Activated B cell treated with CpG ODN at 0.5 μM for 24 hours (primary cell): ENCODE measurements at regions of chr11 and their contacts with region 1.

Region 1: GRCh38 chr11:34585735-34586487 is 35.0 kb upstream of the EHF start:
- DNase-seq: peak; percentile 25
- ATAC-seq: peak; percentile 92
- H3K4me3 Mint-ChIP-seq: peak overlapping the region; percentile 29
- H3K27ac Mint-ChIP-seq: peak overlapping the region; percentile 77
- H3K4me1 Mint-ChIP-seq: peaks cover 25% of the 10 kb centered on the region
- H3K27me3 Mint-ChIP-seq: no peaks in the 10 kb centered on the region
- CTCF ChIP-seq: peak; percentile 18

Region 2: GRCh38 chr11:34512840-34513681 is 72.8 kb before region 1 on chr11:
- CTCF ChIA-PET with region 1: interaction called, 21 read pairs
- POLR2A ChIA-PET with region 1: interaction called, 4 read pairs
- intact Hi-C with region 1: loop called (anchors 1 kb)
- DNase-seq: peak; percentile 44
- ATAC-seq: peak; percentile 99
- H3K4me3 Mint-ChIP-seq: no peak overlapping the region
- H3K27ac Mint-ChIP-seq: no peak overlapping the region
- H3K4me1 Mint-ChIP-seq: no peaks in the 10 kb centered on the region
- H3K27me3 Mint-ChIP-seq: no peaks in the 10 kb centered on the region
- CTCF ChIP-seq: peak; percentile 35

Region 3: GRCh38 chr11:34624069-34624468 is 38.2 kb after region 1 on chr11:
- CTCF ChIA-PET with region 1: interaction called, 14 read pairs
- POLR2A ChIA-PET with region 1: interaction called, 6 read pairs
- intact Hi-C with region 1: no loop called
- DNase-seq: peak; percentile 46
- ATAC-seq: peak; percentile 94
- H3K4me3 Mint-ChIP-seq: peak overlapping the region; percentile 66
- H3K27ac Mint-ChIP-seq: peak overlapping the region; percentile 37
- H3K4me1 Mint-ChIP-seq: peaks cover 31% of the 10 kb centered on the region
- H3K27me3 Mint-ChIP-seq: peaks cover 6% of the 10 kb centered on the region
- CTCF ChIP-seq: no peak

Region 4: DNA sequence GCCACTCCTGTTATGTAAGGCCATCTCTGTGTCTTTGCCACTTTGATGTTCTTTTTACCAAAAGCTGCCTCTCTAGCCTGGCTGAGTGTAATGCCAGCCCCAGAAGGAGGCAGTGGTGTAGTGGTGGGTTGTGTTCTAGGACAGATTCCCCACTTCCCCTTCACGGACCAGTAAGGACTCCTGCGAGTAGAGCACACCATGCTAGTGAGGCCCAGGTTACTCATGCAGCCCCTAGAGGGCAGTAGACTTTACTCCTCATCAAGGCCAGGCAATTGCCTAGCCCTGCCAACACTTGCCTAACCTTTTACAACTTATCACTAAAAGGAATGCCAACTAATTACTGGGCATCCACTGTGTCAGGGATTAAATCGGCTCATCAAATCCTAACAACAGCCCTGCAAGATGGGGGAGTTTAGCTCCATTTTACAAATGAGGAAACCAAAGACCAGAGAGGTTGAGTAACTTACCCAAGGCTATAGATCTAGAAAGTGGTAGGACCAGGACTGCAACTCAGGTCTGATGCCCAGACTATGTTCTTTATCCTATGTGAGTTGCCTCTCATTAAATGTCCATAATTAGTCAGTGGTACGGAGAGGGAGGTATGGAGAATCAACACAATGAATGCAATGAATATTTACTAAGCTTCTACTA is 254.9 kb after region 1 on chr11:
- CTCF ChIA-PET with region 1: interaction called, 13 read pairs
- POLR2A ChIA-PET with region 1: no interaction called
- intact Hi-C with region 1: loop called (anchors 2 kb)
- DNase-seq: no peak
- ATAC-seq: peak; percentile 60
- H3K4me3 Mint-ChIP-seq: no peak overlapping the region
- H3K27ac Mint-ChIP-seq: no peak overlapping the region
- H3K4me1 Mint-ChIP-seq: no peaks in the 10 kb centered on the region
- H3K27me3 Mint-ChIP-seq: peaks cover 10% of the 10 kb centered on the region
- CTCF ChIP-seq: no peak

Region 5: DNA sequence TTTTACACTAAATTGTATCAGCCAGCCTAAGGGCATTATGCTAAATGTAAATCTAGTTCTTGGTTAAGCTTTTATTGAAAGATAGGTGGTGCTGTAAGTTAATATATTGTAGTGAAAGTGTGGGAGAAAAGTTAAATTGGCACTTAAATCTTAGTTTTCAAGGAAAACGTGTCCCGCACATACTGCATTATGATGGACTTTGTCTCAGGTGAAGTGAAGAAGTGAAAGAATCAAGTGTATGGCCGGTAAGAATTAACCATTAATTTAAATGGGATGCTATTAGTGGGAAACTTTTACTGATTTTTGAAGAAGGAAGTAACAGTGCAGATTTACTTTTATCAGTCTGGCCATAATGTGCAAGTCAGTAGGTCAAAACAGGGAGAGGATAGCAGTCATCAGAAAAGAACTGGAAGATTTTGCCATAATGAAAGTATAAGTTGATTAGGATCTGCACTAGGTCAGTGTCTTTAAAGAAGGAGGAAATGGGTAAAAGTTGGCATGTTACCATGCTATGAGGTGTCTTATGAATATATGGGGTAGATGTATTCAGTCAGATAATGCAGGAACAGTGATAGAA is 412.1 kb after region 1 on chr11:
- CTCF ChIA-PET with region 1: no interaction called
- POLR2A ChIA-PET with region 1: no interaction called
- intact Hi-C with region 1: loop called (anchors 5 kb)
- DNase-seq: no peak
- ATAC-seq: peak; percentile 64
- H3K4me3 Mint-ChIP-seq: peak overlapping the region; percentile 52
- H3K27ac Mint-ChIP-seq: peak overlapping the region; percentile 77
- H3K4me1 Mint-ChIP-seq: peaks cover 31% of the 10 kb centered on the region
- H3K27me3 Mint-ChIP-seq: no peaks in the 10 kb centered on the region
- CTCF ChIP-seq: peak; percentile 58

Region 6: GRCh38 chr11:35412285-35412684 is 826.4 kb after region 1 on chr11:
- CTCF ChIA-PET with region 1: no interaction called
- POLR2A ChIA-PET with region 1: no interaction called
- intact Hi-C with region 1: loop called (anchors 5 kb)
- DNase-seq: no peak
- ATAC-seq: no peak
- H3K4me3 Mint-ChIP-seq: no peak overlapping the region
- H3K27ac Mint-ChIP-seq: no peak overlapping the region
- H3K4me1 Mint-ChIP-seq: no peaks in the 10 kb centered on the region
- H3K27me3 Mint-ChIP-seq: peaks cover 24% of the 10 kb centered on the region
- CTCF ChIP-seq: no peak